MCF 10A (cell line): ENCODE measurements at regions of chr6 and their contacts with region 1.

Region 1: GRCh38 chr6:46993846-46994245 is 48.3 kb downstream of the ADGRF1 start:
- DNase-seq: peak; percentile 81
- H3K4me3 Mint-ChIP-seq: no peak overlapping the region
- H3K27ac Mint-ChIP-seq: peak overlapping the region; percentile 82
- H3K4me1 Mint-ChIP-seq: peaks cover 34% of the 10 kb centered on the region
- H3K27me3 Mint-ChIP-seq: no peaks in the 10 kb centered on the region
- CTCF ChIP-seq: no peak

Region 2: GRCh38 chr6:46221222-46221793 is 772.5 kb before region 1 on chr6:
- CTCF ChIA-PET with region 1: no interaction called
- POLR2A ChIA-PET with region 1: no interaction called
- intact Hi-C with region 1: loop called (anchors 2 kb)
- DNase-seq: peak; percentile 47
- H3K4me3 Mint-ChIP-seq: no peak overlapping the region
- H3K27ac Mint-ChIP-seq: no peak overlapping the region
- H3K4me1 Mint-ChIP-seq: peaks cover 5% of the 10 kb centered on the region
- H3K27me3 Mint-ChIP-seq: no peaks in the 10 kb centered on the region
- CTCF ChIP-seq: peak; percentile 65

Region 3: GRCh38 chr6:46626228-46626909 is 367.5 kb before region 1 on chr6:
- CTCF ChIA-PET with region 1: no interaction called
- POLR2A ChIA-PET with region 1: no interaction called
- intact Hi-C with region 1: loop called (anchors 5 kb)
- DNase-seq: peak; percentile 62
- H3K4me3 Mint-ChIP-seq: no peak overlapping the region
- H3K27ac Mint-ChIP-seq: no peak overlapping the region
- H3K4me1 Mint-ChIP-seq: no peaks in the 10 kb centered on the region
- H3K27me3 Mint-ChIP-seq: no peaks in the 10 kb centered on the region
- CTCF ChIP-seq: peak; percentile 55

Region 4: GRCh38 chr6:46781478-46782378 is 212.1 kb before region 1 on chr6:
- CTCF ChIA-PET with region 1: interaction called, 3 read pairs
- POLR2A ChIA-PET with region 1: no interaction called
- intact Hi-C with region 1: loop called (anchors 2 kb)
- DNase-seq: peak; percentile 78
- H3K4me3 Mint-ChIP-seq: no peak overlapping the region
- H3K27ac Mint-ChIP-seq: no peak overlapping the region
- H3K4me1 Mint-ChIP-seq: no peaks in the 10 kb centered on the region
- H3K27me3 Mint-ChIP-seq: peaks cover 10% of the 10 kb centered on the region
- CTCF ChIP-seq: peak; percentile 53

Region 5: DNA sequence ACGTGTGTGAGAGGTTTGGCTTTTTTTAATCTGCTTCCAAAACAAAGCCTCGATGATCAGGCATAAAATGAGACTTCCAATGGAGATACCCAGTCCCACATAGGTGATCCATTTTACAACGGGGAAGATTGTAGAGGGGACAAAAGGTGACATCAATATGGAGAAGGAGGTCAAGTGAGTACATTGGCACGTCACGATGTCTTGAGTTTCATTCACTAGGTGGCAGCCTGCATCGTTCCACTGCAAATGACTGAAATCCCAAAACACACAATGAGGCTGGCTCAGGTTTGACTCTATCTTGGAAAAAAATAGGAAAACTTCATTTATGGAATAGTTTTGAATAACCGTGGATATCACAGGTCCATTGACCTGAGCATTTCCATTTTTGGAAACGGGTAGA is 15.7 kb after region 1 on chr6:
- CTCF ChIA-PET with region 1: no interaction called
- POLR2A ChIA-PET with region 1: no interaction called
- intact Hi-C with region 1: no loop called
- DNase-seq: no peak
- H3K4me3 Mint-ChIP-seq: no peak overlapping the region
- H3K27ac Mint-ChIP-seq: no peak overlapping the region
- H3K4me1 Mint-ChIP-seq: peaks cover 3% of the 10 kb centered on the region
- H3K27me3 Mint-ChIP-seq: no peaks in the 10 kb centered on the region
- CTCF ChIP-seq: no peak

Region 6: DNA sequence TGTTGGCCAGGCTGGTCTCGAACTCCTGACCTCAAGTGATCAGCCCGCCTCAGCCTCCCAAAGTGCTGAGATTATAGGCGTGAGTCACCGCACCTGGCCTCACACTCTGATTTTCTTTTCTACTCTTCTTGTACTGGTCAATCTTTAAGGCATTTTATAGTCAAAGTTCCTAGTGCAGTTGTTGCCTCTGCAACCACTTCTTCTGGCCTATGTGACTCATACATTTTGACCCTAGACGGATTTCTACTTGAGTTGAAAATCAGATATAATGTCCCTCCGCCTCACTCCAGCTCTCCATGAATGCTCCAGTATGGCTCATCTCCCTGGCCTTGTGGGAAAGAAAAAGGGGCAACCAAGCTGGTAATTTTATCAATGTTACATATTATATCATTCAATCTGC is 273.5 kb after region 1 on chr6:
- CTCF ChIA-PET with region 1: no interaction called
- POLR2A ChIA-PET with region 1: no interaction called
- intact Hi-C with region 1: no loop called
- DNase-seq: no peak
- H3K4me3 Mint-ChIP-seq: no peak overlapping the region
- H3K27ac Mint-ChIP-seq: no peak overlapping the region
- H3K4me1 Mint-ChIP-seq: peaks cover 11% of the 10 kb centered on the region
- H3K27me3 Mint-ChIP-seq: no peaks in the 10 kb centered on the region
- CTCF ChIP-seq: no peak

Region 7: GRCh38 chr6:47309291-47310130 is 315.7 kb after region 1 on chr6 and contains the start of gene TNFRSF21:
- CTCF ChIA-PET with region 1: no interaction called
- POLR2A ChIA-PET with region 1: no interaction called
- intact Hi-C with region 1: loop called (anchors 5 kb)
- DNase-seq: peak; percentile 91
- H3K4me3 Mint-ChIP-seq: peak within 1 kb of the TSS; percentile 89
- H3K27ac Mint-ChIP-seq: peak within 1 kb of the TSS; percentile 77
- H3K4me1 Mint-ChIP-seq: peaks cover 12% of the 10 kb centered on the region
- H3K27me3 Mint-ChIP-seq: no peaks in the 10 kb centered on the region
- CTCF ChIP-seq: peak; percentile 90
- total RNA-seq, gene TNFRSF21: 17.8 and 19.3 TPM in 2 replicates